Gastrocnemius medialis (tissue), 4 donors: ENCODE measurements at regions of chr9 and their contacts with region 1.

Region 1: DNA sequence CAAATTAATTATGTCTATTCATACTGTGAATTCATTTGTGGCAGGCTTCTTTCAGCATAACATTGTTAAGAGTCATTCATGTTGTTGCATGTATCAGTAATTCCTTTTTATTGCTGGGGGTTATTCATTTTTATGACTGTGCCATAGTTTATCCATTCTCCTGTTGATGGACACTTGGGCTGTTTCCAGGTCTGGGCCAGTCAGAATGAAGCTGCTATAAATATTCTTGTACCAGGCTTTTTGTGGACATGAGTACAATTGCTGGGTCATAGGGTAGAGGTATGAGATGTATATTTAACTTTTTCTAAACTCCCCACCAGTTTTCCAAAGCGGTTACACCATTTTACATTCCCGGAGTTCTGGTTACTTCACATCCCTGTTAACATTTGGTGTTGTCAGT is 13.6 kb downstream of the PRPF4 start:
- DNase-seq: no peak
- ATAC-seq: no peak
- H3K4me3 ChIP-seq: no peak overlapping the region
- H3K27ac ChIP-seq: no peak overlapping the region
- H3K4me1 ChIP-seq: no peaks in the 10 kb centered on the region
- H3K27me3 ChIP-seq: no peaks in the 10 kb centered on the region
- CTCF ChIP-seq: no peak
- POLR2A ChIP-seq: no peak

Region 2: DNA sequence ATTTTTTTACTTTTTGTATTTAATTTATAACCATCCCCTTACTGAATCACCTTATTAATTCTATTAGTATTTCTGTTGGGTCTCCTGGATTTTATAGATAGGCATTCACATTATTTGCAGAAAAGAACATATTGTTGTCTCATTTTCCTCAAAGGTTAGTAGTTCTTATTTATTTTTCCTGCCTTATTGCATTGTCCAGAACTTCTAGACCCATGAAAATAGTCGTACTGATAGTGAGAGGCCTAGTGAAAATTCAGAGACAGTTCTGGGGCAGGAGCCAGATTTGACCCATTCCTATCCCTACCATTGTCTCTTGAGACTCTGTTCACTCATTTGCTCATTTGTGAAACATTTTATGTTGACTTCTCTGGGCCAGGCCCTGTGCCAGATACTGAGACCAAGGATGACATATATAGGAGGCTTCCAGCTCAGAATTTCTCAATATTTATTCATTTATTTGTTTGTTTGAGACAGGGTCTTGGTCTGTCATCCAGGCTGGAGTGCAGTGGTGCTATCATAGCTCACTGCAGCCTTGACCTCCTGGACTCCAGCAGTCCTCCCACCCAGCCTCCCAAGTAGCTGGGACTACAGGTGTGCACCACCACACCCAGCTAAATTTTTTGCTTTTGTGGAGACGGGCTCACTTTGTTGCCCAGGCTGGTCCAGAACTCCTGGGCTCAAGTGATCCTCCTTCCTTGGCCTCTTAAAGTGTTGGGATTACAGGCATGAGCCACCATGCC is 900.9 kb after region 1 on chr9:
- in situ Hi-C with region 1: no loop called
- intact Hi-C with region 1: loop called (anchors 5 kb)
- DNase-seq: no peak
- ATAC-seq: no peak
- H3K4me3 ChIP-seq: no peak overlapping the region
- H3K27ac ChIP-seq: no peak overlapping the region
- H3K4me1 ChIP-seq: peaks cover 2 to 11% of the 10 kb centered on the region in 2 donors
- H3K27me3 ChIP-seq: no peaks in the 10 kb centered on the region
- CTCF ChIP-seq: no peak
- POLR2A ChIP-seq: no peak